ENCODE measurements at regions of chr5 and their contacts with region 1.

Region 1: GRCh38 chr5:167945542-167946384 is 345.7 kb upstream of the WWC1 start:
- DNase-seq: peak; percentile 56 to 80 (median 65)
- ATAC-seq: peak; percentile 80 to 85 (median 82)
- H3K4me3 ChIP-seq: no peak overlapping the region
- H3K27ac ChIP-seq: peak overlapping the region; percentile 67 to 94 (median 86)
- H3K4me1 ChIP-seq: peaks cover 0 to 82% (median 36%) of the 10 kb centered on the region in 12 donors
- H3K27me3 ChIP-seq: no peaks in the 10 kb centered on the region
- CTCF ChIP-seq: no peak
- POLR2A ChIP-seq: no peak

Region 2: GRCh38 chr5:167653645-167654106 is 292.1 kb before region 1 on chr5:
- intact Hi-C with region 1: no loop called
- DNase-seq: no peak
- ATAC-seq: no peak
- H3K4me3 ChIP-seq: no peak overlapping the region
- H3K27ac ChIP-seq: no peak overlapping the region
- H3K4me1 ChIP-seq: no peaks in the 10 kb centered on the region
- H3K27me3 ChIP-seq: no peaks in the 10 kb centered on the region
- CTCF ChIP-seq: no peak
- POLR2A ChIP-seq: no peak

Region 3: DNA sequence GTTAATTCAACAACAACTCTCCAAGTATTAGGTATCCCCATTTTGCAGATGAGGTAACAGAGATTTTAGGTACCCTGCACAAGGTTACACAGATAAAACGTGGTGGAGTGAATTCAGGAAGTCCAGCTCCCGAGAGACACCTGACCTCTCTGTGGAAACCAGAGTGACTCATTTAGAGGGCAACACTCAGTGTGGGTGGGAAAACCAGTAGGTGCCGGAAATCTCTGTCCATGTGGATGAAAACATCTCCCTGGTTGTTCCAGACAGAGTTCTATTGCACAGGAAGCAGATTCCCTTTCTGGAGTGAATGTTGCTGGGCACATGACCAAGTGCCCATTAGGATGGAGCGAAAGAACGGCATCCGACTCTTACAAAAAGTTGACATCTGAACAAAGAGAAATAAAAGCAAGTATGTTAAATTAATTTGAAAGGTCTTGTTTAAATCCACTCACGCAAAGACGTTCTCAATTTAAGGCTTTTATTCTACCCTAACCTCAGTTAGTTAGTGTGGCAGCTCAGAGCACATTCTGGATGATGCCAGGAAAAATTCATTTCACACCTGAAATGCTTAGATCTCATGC is 46.2 kb before region 1 on chr5:
- intact Hi-C with region 1: no loop called
- DNase-seq: no peak
- ATAC-seq: no peak
- H3K4me3 ChIP-seq: no peak overlapping the region
- H3K27ac ChIP-seq: no peak overlapping the region
- H3K4me1 ChIP-seq: no peaks in the 10 kb centered on the region
- H3K27me3 ChIP-seq: peaks cover 0 to 13% (median 0%) of the 10 kb centered on the region in 9 donors
- CTCF ChIP-seq: no peak
- POLR2A ChIP-seq: no peak

Region 4: GRCh38 chr5:168073991-168074800 is 128.4 kb after region 1 on chr5:
- intact Hi-C with region 1: loop called in 1 of 10 experiments (anchors 5 kb)
- DNase-seq: peak in 1 of 5 donors; percentile 27
- ATAC-seq: peak in 3 of 4 donors; percentile 11 to 31 (median 25)
- H3K4me3 ChIP-seq: no peak overlapping the region
- H3K27ac ChIP-seq: peak overlapping the region in 4 of 12 donors; percentile 13 to 72 (median 54)
- H3K4me1 ChIP-seq: peaks cover 0 to 40% (median 12%) of the 10 kb centered on the region in 12 donors
- H3K27me3 ChIP-seq: no peaks in the 10 kb centered on the region
- CTCF ChIP-seq: no peak
- POLR2A ChIP-seq: no peak